ENCODE measurements at regions of chr4 and their contacts with region 1.

Region 1: DNA sequence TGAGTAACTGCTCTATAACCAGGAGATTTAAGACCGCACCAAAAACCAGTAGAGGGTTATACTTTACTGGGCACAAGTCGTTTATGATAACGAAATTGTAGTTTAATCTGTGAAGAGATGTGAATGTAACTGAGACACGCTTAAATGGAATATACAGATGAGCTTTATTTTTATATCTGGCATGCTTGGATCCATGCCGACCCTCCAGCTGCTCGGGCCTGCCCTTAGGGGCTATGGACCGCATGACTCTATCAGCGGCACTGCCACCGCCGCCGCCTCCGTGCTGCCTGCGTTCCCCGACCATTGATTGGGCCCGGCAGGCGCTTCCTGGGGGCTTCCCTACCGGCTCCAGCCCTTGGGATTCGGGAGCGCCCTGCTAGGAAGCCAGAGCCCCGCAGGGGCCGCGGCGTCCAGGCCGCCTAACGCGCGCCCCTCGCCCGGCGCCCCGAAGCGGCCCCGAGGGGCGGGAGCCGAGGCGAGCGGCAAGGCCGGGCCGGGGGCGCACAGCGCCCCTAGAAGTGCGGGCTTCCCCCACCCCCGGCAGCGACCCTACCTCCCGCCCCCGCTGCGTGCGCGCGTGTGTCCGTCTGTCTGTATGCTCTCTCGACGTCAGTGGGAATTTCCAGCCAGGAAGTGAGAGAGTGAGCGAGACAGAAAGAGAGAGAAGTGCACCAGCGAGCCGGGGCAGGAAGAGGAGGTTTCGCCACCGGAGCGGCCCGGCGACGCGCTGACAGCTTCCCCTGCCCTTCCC is at the start of gene NFKB1:
- DNase-seq: peak in 1 of 2 experiments; percentile 25
- H3K4me3 ChIP-seq: peak within 1 kb of the TSS; percentile 72
- H3K4me3 Mint-ChIP-seq: peak within 1 kb of the TSS; percentile 95
- H3K27ac Mint-ChIP-seq: peak within 1 kb of the TSS; percentile 96
- H3K4me1 ChIP-seq: peaks cover 18% of the 10 kb centered on the region; the same call in 1 of the 2 replicates
- H3K4me1 Mint-ChIP-seq: peaks cover 31% of the 10 kb centered on the region
- H3K27me3 ChIP-seq: no peaks in the 10 kb centered on the region
- H3K27me3 Mint-ChIP-seq: no peaks in the 10 kb centered on the region
- CTCF ChIP-seq: no peak
- total RNA-seq, gene NFKB1: 33.0 and 39.8 TPM in 2 replicates

Region 2: GRCh38 chr4:102439812-102440211 is 61.1 kb before region 1 on chr4:
- CTCF ChIA-PET with region 1: no interaction called
- POLR2A ChIA-PET with region 1: no interaction called
- intact Hi-C with region 1: loop called (anchors 2 kb)
- DNase-seq: no peak
- H3K4me3 ChIP-seq: no peak overlapping the region
- H3K4me3 Mint-ChIP-seq: no peak overlapping the region
- H3K27ac Mint-ChIP-seq: peak overlapping the region; percentile 53
- H3K4me1 ChIP-seq: peaks cover 56% of the 10 kb centered on the region
- H3K4me1 Mint-ChIP-seq: peaks cover 49% of the 10 kb centered on the region
- H3K27me3 ChIP-seq: no peaks in the 10 kb centered on the region
- H3K27me3 Mint-ChIP-seq: no peaks in the 10 kb centered on the region
- CTCF ChIP-seq: no peak

Region 3: DNA sequence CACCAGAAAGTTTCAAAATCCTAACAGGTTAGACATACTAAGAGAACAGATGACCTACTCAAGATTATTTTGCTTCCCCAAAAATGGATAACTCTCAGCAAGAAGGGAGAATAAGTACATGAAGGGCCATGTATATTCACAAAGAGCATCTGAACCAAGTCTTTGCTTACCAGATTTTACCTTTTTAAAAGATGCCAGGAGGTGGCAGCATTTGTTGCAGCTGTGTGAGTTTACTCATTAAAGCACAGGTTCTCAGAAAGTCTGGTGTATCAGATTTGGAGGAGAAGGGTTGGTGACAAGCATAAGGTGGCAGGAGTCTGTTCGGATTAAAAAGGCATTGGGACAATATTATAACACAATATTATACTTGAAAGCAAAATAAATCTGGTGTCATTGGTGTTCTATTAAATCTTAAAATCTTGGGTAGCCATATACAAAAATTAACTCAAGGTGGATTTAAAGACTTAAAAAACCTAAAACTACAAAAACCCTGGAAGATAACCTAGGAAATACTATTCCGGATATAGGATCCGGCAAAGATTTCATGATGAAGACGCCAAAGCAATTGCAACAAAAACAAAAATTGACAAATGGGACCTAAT is 51.0 kb before region 1 on chr4:
- CTCF ChIA-PET with region 1: no interaction called
- POLR2A ChIA-PET with region 1: no interaction called
- intact Hi-C with region 1: loop called (anchors 1 kb)
- DNase-seq: peak; percentile 43 to 64
- H3K4me3 ChIP-seq: no peak overlapping the region
- H3K4me3 Mint-ChIP-seq: no peak overlapping the region
- H3K27ac Mint-ChIP-seq: no peak overlapping the region
- H3K4me1 ChIP-seq: no peaks in the 10 kb centered on the region
- H3K4me1 Mint-ChIP-seq: no peaks in the 10 kb centered on the region
- H3K27me3 ChIP-seq: no peaks in the 10 kb centered on the region
- H3K27me3 Mint-ChIP-seq: no peaks in the 10 kb centered on the region
- CTCF ChIP-seq: peak; percentile 59 to 66

Region 4: DNA sequence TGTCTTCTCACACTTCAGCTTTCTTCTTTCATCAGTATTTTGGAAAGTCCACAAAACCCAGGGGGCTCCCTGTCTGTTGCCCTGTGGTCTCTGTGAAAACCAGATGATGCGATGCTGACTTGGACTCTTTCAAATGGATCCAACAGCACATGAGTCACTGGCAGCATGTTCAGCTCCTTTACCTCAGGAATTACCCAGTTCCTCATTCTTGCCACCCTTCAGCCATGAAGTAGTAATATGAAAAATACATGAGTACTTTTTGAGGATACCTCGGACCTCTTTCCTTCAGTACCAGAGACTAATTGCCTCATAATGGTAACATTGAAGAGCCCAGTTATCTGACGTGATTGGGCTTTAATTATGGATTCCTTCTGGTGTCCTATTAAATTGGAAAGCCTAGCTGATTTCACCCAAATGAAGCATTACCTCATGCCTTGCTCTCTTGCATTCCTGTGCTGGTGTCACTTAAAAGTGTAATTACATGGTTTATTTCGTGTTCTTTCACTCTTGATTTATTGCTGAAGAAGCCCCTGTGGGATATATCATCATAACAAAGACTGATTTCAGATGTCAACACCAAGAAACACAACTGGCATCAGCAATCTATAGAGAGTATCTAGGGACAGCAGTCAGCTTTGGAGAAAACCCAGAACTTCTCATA is 63.7 kb after region 1 on chr4:
- CTCF ChIA-PET with region 1: no interaction called
- POLR2A ChIA-PET with region 1: no interaction called
- intact Hi-C with region 1: loop called (anchors 5 kb)
- DNase-seq: no peak
- H3K4me3 ChIP-seq: no peak overlapping the region
- H3K4me3 Mint-ChIP-seq: no peak overlapping the region
- H3K27ac Mint-ChIP-seq: no peak overlapping the region
- H3K4me1 ChIP-seq: peaks cover 26% of the 10 kb centered on the region
- H3K4me1 Mint-ChIP-seq: peaks cover 18% of the 10 kb centered on the region
- H3K27me3 ChIP-seq: no peaks in the 10 kb centered on the region
- H3K27me3 Mint-ChIP-seq: no peaks in the 10 kb centered on the region
- CTCF ChIP-seq: no peak

Region 5: DNA sequence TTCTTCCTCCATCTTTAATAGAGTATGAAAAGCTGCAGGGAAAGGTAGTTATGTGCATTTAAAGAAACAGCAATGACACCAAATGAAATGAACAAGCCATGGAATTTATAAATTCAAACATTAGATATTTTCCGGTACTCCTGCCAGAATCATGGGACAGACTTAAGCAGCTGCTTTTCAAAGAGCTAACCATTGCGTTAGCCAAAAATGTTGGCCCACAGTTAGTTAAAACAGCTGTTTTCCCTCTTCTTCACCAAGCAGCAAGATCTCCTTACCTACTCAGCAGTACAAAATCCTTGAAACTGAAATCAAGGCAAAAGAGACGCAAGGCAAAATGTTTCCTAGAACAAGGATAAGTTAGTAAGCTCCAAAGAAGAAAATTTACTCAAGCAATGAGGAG is 195.9 kb after region 1 on chr4:
- CTCF ChIA-PET with region 1: no interaction called
- POLR2A ChIA-PET with region 1: no interaction called
- intact Hi-C with region 1: no loop called
- DNase-seq: no peak
- H3K4me3 ChIP-seq: no peak overlapping the region
- H3K4me3 Mint-ChIP-seq: no peak overlapping the region
- H3K27ac Mint-ChIP-seq: no peak overlapping the region
- H3K4me1 ChIP-seq: no peaks in the 10 kb centered on the region
- H3K4me1 Mint-ChIP-seq: no peaks in the 10 kb centered on the region
- H3K27me3 ChIP-seq: no peaks in the 10 kb centered on the region
- H3K27me3 Mint-ChIP-seq: no peaks in the 10 kb centered on the region
- CTCF ChIP-seq: no peak

Region 6: DNA sequence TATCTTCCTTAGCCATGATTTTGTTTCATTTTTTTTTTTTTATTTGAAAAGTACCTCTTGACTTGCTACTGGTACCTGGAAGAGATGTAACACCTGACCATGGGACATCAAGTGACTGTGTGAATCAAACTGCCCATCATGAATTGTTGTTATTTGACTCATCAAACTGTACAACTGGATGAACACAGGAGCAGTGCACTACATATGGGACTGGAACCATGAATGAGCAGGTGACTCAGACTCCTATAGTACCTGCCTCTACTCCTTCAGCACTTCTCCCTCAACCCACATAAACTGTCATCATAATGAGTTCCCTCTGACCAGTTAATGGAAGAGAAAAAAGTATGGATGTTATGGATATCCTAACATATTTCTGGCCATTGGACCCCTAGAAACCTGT is 342.4 kb after region 1 on chr4:
- CTCF ChIA-PET with region 1: no interaction called
- POLR2A ChIA-PET with region 1: no interaction called
- intact Hi-C with region 1: no loop called
- DNase-seq: no peak
- H3K4me3 ChIP-seq: no peak overlapping the region
- H3K4me3 Mint-ChIP-seq: no peak overlapping the region
- H3K27ac Mint-ChIP-seq: no peak overlapping the region
- H3K4me1 ChIP-seq: no peaks in the 10 kb centered on the region
- H3K4me1 Mint-ChIP-seq: no peaks in the 10 kb centered on the region
- H3K27me3 ChIP-seq: no peaks in the 10 kb centered on the region
- H3K27me3 Mint-ChIP-seq: no peaks in the 10 kb centered on the region
- CTCF ChIP-seq: no peak

Measured in Caco-2 (cell line).